Heart left ventricle (tissue), 16 donors: ENCODE measurements at regions of chr11 and their contacts with region 1.

Region 1: GRCh38 chr11:46121724-46122477 is 647 bp upstream of the PHF21A start:
- DNase-seq: peak; percentile 80 to 87 (median 83)
- ATAC-seq: peak in 3 of 4 donors; percentile 4 to 51 (median 42)
- H3K4me3 ChIP-seq: peak overlapping the region; percentile 50 to 92 (median 74)
- H3K27ac ChIP-seq: peak overlapping the region; percentile 43 to 98 (median 92)
- H3K4me1 ChIP-seq: peaks cover 0 to 35% (median 24%) of the 10 kb centered on the region in 12 donors
- H3K27me3 ChIP-seq: no peaks in the 10 kb centered on the region
- CTCF ChIP-seq: no peak
- POLR2A ChIP-seq: no peak

Region 2: DNA sequence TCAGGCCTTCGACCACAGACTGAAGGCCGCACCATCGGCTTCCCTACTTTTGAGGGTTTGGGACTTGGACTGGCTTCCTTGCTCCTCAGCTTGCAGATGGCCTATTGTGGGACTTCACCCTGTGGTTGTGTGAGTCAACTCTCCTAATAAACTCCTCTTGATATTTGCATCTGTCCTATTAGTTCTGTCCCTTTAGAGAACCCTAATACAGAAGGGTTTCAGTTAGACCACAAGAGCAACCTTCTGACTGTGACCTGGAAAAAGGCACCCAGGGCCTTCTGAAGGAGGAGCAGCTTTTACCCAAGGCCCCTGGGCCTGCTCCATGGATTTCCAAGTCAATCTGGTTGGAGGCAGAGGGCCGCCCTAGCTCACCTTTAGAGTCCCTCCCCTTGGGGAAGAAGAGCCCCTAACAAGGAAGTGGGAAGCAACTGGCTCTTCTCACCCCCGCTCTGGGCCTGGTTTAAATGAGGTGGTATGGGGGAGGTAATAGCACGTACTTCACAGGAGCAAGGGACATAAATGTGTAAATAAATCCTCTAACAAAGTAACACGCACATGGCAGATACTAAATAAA is 445.3 kb before region 1 on chr11:
- intact Hi-C with region 1: no loop called
- DNase-seq: no peak
- ATAC-seq: no peak
- H3K4me3 ChIP-seq: no peak overlapping the region
- H3K27ac ChIP-seq: no peak overlapping the region
- H3K4me1 ChIP-seq: no peaks in the 10 kb centered on the region
- H3K27me3 ChIP-seq: no peaks in the 10 kb centered on the region
- CTCF ChIP-seq: no peak
- POLR2A ChIP-seq: no peak

Region 3: GRCh38 chr11:45846974-45847910 is 274.7 kb before region 1 on chr11 and contains the start of gene CRY2:
- intact Hi-C with region 1: loop called in 1 of 10 experiments (anchors 10 kb)
- DNase-seq: peak; percentile 99 to 100 (median 99)
- ATAC-seq: peak; percentile 94 to 97 (median 95)
- H3K4me3 ChIP-seq: peak within 1 kb of the TSS; percentile 73 to 97 (median 90)
- H3K27ac ChIP-seq: peak within 1 kb of the TSS; percentile 83 to 99 (median 96)
- H3K4me1 ChIP-seq: peaks cover 8 to 65% (median 44%) of the 10 kb centered on the region in 12 donors
- H3K27me3 ChIP-seq: no peaks in the 10 kb centered on the region
- CTCF ChIP-seq: no peak
- POLR2A ChIP-seq: peak; percentile 90 to 98
- total RNA-seq, gene CRY2: 40.2 to 132 (median 72.7) TPM

Region 4: DNA sequence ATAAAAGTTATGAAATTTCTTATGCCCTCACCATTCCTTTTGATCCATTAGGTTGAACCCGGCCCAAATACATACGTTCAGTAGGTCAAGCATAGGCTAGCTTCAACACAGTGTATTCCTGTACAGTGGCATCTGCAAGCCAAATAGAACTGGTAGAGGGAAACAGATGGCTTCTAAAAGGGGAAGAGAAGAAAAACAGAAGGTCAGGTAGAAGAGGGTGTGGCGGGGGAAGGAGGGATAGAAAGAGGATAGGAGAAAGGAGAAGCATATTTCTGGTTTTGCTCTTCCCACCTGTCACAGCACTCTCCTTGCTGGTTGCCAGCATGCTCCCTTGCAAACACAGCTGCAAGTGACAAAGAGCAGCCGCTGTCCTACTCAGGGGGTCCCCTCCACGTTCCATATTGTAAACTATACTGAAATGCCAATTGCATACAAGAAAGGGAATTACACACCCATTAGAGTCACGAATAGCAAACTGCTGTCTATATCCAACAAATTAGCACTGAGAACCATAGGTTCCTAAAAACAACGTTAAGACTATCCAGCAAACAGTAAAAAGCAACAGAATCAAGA is 72.5 kb before region 1 on chr11:
- intact Hi-C with region 1: loop called in 1 of 10 experiments (anchors 5 kb)
- DNase-seq: no peak
- ATAC-seq: peak in 3 of 4 donors; percentile 35 to 41 (median 39)
- H3K4me3 ChIP-seq: no peak overlapping the region
- H3K27ac ChIP-seq: peak overlapping the region in 7 of 12 donors; percentile 18 to 62 (median 29)
- H3K4me1 ChIP-seq: peaks cover 4 to 44% (median 34%) of the 10 kb centered on the region in 12 donors
- H3K27me3 ChIP-seq: no peaks in the 10 kb centered on the region
- CTCF ChIP-seq: no peak
- POLR2A ChIP-seq: no peak

Region 5: DNA sequence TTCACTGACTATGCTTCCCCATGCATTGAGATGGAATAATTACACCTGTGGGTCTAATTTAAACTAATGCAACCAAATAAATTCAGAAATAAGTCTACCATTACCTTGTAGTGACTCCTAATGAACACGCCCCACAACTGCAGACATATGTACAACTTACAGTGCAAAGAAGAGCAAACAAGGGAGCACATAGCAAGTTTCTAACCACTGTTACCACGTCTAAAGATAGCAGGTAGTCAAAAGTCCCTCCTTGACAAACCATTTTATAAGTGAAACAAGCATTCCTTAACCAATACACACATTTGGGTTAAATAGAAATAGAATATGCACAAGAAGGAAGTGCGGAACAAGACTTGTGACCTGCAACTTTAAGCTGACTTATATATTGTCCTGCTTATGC is 21.2 kb before region 1 on chr11:
- intact Hi-C with region 1: no loop called
- DNase-seq: no peak
- ATAC-seq: no peak
- H3K4me3 ChIP-seq: peak overlapping the region in 2 of 12 donors; percentile 30 to 43
- H3K27ac ChIP-seq: peak overlapping the region in 4 of 12 donors; percentile 47 to 77 (median 62)
- H3K4me1 ChIP-seq: peaks cover 3 to 71% (median 43%) of the 10 kb centered on the region in 12 donors
- H3K27me3 ChIP-seq: no peaks in the 10 kb centered on the region
- CTCF ChIP-seq: no peak
- POLR2A ChIP-seq: no peak

Region 6: DNA sequence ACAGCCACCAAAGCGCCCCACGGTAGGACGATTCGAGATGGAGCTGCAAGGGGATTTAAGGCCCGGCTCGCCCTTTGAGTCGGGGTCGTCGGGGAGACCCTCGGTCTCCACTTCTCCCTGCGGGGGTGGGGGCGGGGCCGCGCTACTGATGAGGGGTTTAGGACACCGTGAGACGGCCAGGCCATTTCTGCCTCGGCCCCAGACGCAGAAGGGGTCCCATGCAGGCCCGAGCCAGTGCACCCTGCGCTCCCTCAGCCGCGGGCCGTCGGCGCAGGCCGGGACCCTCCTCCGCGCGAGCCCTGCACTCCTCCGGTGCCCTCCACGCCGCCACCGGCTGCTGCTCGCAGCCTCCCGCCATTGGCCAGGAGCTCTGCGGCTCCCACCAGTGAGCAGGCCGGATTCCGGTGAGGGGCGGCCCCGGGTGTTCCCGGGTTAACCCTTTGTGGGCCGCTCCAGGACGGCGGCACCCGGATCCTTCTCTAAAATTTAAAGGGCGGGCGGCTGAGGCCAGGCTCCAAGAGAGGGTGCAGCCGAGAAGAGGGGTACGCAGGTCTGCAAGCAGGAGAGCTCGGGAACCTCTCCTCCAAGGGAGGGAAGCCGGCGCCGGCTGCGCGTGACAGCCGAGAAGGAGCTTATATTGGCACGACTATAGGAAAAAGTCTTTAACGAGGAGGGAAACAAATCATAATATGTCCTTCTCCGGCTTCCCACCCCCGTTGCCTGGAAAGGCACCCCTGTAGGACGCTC is 173.6 kb after region 1 on chr11:
- intact Hi-C with region 1: loop called in 1 of 10 experiments (anchors 10 kb)
- DNase-seq: peak; percentile 81 to 89 (median 87)
- ATAC-seq: peak; percentile 87 to 94 (median 92)
- H3K4me3 ChIP-seq: peak overlapping the region; percentile 31 to 77 (median 58)
- H3K27ac ChIP-seq: peak overlapping the region in 11 of 12 donors; percentile 5 to 70 (median 56)
- H3K4me1 ChIP-seq: peaks cover 0 to 55% (median 32%) of the 10 kb centered on the region in 12 donors
- H3K27me3 ChIP-seq: peaks cover 0 to 25% (median 0%) of the 10 kb centered on the region in 9 donors
- CTCF ChIP-seq: no peak
- POLR2A ChIP-seq: peak in 1 of 2 donors; percentile 25

Region 7: GRCh38 chr11:46315033-46315738 is 193.3 kb after region 1 on chr11:
- intact Hi-C with region 1: loop called in 1 of 10 experiments (anchors 10 kb)
- DNase-seq: peak in 4 of 5 donors; percentile 53 to 79 (median 67)
- ATAC-seq: peak in 3 of 4 donors; percentile 32 to 54 (median 43)
- H3K4me3 ChIP-seq: no peak overlapping the region
- H3K27ac ChIP-seq: peak overlapping the region in 9 of 12 donors; percentile 6 to 73 (median 58)
- H3K4me1 ChIP-seq: peaks cover 0 to 42% (median 7%) of the 10 kb centered on the region in 12 donors
- H3K27me3 ChIP-seq: no peaks in the 10 kb centered on the region
- CTCF ChIP-seq: peak; percentile 77 to 87 (median 81)
- POLR2A ChIP-seq: no peak